Common myeloid progenitor, CD34-positive (primary cell): ENCODE measurements at regions of chr2 and their contacts with region 1.

Region 1: GRCh38 chr2:136238286-136239078 is 120.5 kb upstream of the CXCR4 start:
- DNase-seq: peak; percentile 75 to 95 (median 90)
- H3K4me3 ChIP-seq: peak overlapping the region in 3 of 7 experiments; percentile 17 to 44 (median 24)
- H3K27ac ChIP-seq: peak overlapping the region in 1 of 2 experiments; percentile 69
- H3K4me1 ChIP-seq: peaks cover 15 to 30% (median 25%) of the 10 kb centered on the region in 4 experiments
- H3K27me3 ChIP-seq: no peaks in the 10 kb centered on the region

Region 2: DNA sequence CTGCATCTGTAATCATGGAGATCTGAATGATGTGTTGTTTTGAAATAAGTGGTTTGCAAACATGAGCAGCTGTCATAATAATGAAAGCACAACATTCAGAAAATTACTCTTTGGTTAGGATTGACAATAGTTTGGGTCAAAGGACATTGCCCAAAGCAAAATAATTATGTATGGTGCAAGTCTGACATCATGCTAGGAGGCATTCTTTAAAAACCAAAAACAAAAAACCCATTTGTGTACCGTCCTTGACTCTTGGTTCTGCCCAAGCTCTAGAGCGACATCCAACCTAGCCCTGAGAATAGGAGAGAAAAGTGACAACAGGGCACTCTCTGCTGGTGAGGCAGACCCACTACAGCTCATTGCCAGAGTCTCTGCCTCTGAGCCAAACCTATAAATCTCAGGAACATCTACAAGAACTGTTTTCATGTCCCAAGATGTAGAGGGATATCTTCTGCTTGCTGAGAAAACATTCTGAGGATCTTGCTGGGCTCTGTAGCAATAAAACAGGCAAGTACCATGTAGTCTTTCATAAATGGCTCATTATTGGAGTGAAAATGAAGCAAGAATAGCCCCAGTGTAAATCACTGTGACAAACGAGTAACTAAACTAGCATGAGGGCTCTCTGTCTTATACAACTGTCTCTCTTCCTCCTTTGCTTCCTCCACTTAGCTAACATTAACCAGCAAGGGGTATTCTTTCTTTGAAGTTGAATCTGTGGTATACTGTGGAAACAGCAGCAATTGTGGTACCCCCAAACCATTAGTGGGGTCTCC is 146.2 kb after region 1 on chr2:
- CTCF ChIA-PET with region 1: no interaction called
- POLR2A ChIA-PET with region 1: interaction called, 10 read pairs
- DNase-seq: peak; percentile 60 to 83 (median 79)
- H3K4me3 ChIP-seq: peak overlapping the region in 1 of 7 experiments; percentile 52
- H3K27ac ChIP-seq: no peak overlapping the region
- H3K4me1 ChIP-seq: peaks cover 13 to 27% (median 19%) of the 10 kb centered on the region in 4 experiments
- H3K27me3 ChIP-seq: no peaks in the 10 kb centered on the region